K562 (cell line): ENCODE measurements at regions of chr17 and their contacts with region 1.

Region 1: GRCh38 chr17:59004338-59005111 is 102.2 kb downstream of the TRIM37 start:
- DNase-seq: peak; percentile 52 to 78 (median 60)
- ATAC-seq: peak; percentile 90
- H3K4me3 ChIP-seq: no peak overlapping the region
- H3K27ac ChIP-seq: peak overlapping the region; percentile 24; the same call in 1 of the 3 replicates
- H3K4me1 ChIP-seq: peaks cover 0 to 2% of the 10 kb centered on the region in 2 experiments; a peak in 1 of 5 replicates
- H3K27me3 ChIP-seq: no peaks in the 10 kb centered on the region
- CTCF ChIP-seq: peak; percentile 75 to 89 (median 83)
- EP300 ChIP-seq: no peak
- POLR2A ChIP-seq: no peak
- RAD21 ChIP-seq: peak; percentile 95 to 97

Region 2: GRCh38 chr17:58277107-58277801 is 727.3 kb before region 1 on chr17:
- CTCF ChIA-PET with region 1: no interaction called
- POLR2A ChIA-PET with region 1: no interaction called
- in situ Hi-C with region 1: loop called (anchors 25 kb)
- intact Hi-C with region 1: no loop called
- DNase-seq: peak; percentile 63 to 69 (median 64)
- ATAC-seq: peak; percentile 71
- H3K4me3 ChIP-seq: no peak overlapping the region
- H3K27ac ChIP-seq: no peak overlapping the region
- H3K4me1 ChIP-seq: peaks cover 5 to 21% of the 10 kb centered on the region in 2 experiments; a peak in 3 of 5 replicates
- H3K27me3 ChIP-seq: peaks cover 30 to 78% of the 10 kb centered on the region in 2 experiments; a peak in 4 of 5 replicates
- CTCF ChIP-seq: peak; percentile 59 to 79 (median 66)
- EP300 ChIP-seq: no peak
- POLR2A ChIP-seq: no peak
- RAD21 ChIP-seq: peak; percentile 56 to 73

Region 3: GRCh38 chr17:58710936-58711775 is 293.4 kb before region 1 on chr17:
- CTCF ChIA-PET with region 1: interaction called, 43 read pairs
- POLR2A ChIA-PET with region 1: interaction called, 3 read pairs
- in situ Hi-C with region 1: loop called (anchors 5 kb)
- intact Hi-C with region 1: loop called (anchors 1 kb)
- DNase-seq: peak; percentile 21 to 73 (median 23)
- ATAC-seq: peak; percentile 68
- H3K4me3 ChIP-seq: no peak overlapping the region
- H3K27ac ChIP-seq: no peak overlapping the region
- H3K4me1 ChIP-seq: peaks cover 2 to 7% of the 10 kb centered on the region in 2 experiments; a peak in 3 of 5 replicates
- H3K27me3 ChIP-seq: no peaks in the 10 kb centered on the region
- CTCF ChIP-seq: peak in 2 of 3 experiments; percentile 57 to 85; a peak in 4 of 6 replicates
- EP300 ChIP-seq: no peak
- POLR2A ChIP-seq: no peak
- RAD21 ChIP-seq: peak; percentile 87 to 94